ENCODE measurements at regions of chr14 and their contacts with region 1.

Region 1: DNA sequence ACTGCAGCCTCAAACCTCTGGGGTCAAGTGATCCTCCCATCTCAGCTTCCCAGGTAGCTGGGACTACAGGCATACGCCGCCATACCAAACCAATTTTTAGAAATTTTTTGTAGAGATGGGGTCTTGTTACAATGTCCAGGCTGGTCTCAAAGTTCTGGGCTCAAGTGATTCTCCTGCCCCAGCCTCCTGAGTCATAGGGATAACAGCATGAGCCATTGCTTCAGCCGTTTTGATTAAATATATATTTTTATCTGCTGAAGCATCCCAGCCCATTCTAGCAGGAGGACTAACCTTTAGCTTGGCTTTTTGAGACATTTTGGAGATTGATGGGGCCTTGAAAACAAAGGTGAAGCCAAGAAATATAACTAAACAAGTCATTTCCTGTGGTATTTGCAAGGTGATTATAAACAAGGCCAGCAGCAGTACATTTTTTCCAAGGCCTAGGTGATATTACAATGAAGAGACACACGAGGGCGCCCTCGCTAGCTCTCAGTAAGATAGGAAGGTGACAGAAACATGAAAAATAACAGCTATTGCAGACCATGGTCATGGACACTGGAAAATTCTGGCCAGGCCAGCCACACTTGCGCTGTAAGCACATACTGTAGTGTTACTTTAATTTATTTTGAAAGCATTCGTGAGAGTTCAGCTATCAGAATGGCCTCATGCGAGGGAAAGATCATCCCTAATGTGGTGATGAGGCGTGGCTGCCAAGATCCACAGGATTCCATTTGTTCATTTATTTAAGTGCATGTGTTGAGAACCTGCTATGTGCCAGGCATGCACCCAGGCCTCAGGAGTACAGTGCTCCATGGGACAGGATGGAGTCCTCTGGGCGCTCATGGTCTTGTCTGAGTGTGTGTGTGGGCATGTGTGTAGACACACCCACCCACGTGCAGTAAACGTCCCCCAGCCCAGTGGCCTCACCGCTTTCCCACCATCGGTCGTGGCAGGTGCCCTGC is 63.5 kb downstream of the DGLUCY start:
- DNase-seq: peak in 1 of 2 experiments; percentile 66
- H3K4me3 ChIP-seq: no peak overlapping the region
- H3K27ac ChIP-seq: no peak overlapping the region
- H3K4me1 ChIP-seq: no peaks in the 10 kb centered on the region; a peak in 2 of 7 replicates
- H3K27me3 ChIP-seq: no peaks in the 10 kb centered on the region
- CTCF ChIP-seq: peak in 2 of 3 experiments; percentile 63 to 72; a peak in 3 of 4 replicates
- EP300 ChIP-seq: no peak
- POLR2A ChIP-seq: no peak
- RAD21 ChIP-seq: peak; percentile 71 to 81

Region 2: GRCh38 chr14:90903101-90903500 is 274.3 kb before region 1 on chr14:
- CTCF ChIA-PET with region 1: interaction called, 118 read pairs
- POLR2A ChIA-PET with region 1: no interaction called
- DNase-seq: no peak
- H3K4me3 ChIP-seq: no peak overlapping the region
- H3K27ac ChIP-seq: no peak overlapping the region
- H3K4me1 ChIP-seq: no peaks in the 10 kb centered on the region
- H3K27me3 ChIP-seq: no peaks in the 10 kb centered on the region
- CTCF ChIP-seq: peak in 2 of 3 experiments; percentile 65 to 69; a peak in 3 of 4 replicates
- EP300 ChIP-seq: no peak
- POLR2A ChIP-seq: no peak
- RAD21 ChIP-seq: peak; percentile 85 to 89

Region 3: GRCh38 chr14:91146661-91147060 is 30.7 kb before region 1 on chr14:
- CTCF ChIA-PET with region 1: interaction called, 10 read pairs
- POLR2A ChIA-PET with region 1: no interaction called
- DNase-seq: no peak
- H3K4me3 ChIP-seq: no peak overlapping the region
- H3K27ac ChIP-seq: no peak overlapping the region
- H3K4me1 ChIP-seq: no peaks in the 10 kb centered on the region
- H3K27me3 ChIP-seq: no peaks in the 10 kb centered on the region
- CTCF ChIP-seq: no peak
- EP300 ChIP-seq: no peak
- POLR2A ChIP-seq: no peak
- RAD21 ChIP-seq: no peak

Region 4: GRCh38 chr14:91193069-91193468 is 15.7 kb after region 1 on chr14:
- CTCF ChIA-PET with region 1: interaction called, 16 read pairs
- POLR2A ChIA-PET with region 1: no interaction called
- DNase-seq: no peak
- H3K4me3 ChIP-seq: no peak overlapping the region
- H3K27ac ChIP-seq: no peak overlapping the region
- H3K4me1 ChIP-seq: no peaks in the 10 kb centered on the region; a peak in 1 of 7 replicates
- H3K27me3 ChIP-seq: no peaks in the 10 kb centered on the region
- CTCF ChIP-seq: no peak
- EP300 ChIP-seq: no peak
- POLR2A ChIP-seq: no peak
- RAD21 ChIP-seq: no peak

Region 5: DNA sequence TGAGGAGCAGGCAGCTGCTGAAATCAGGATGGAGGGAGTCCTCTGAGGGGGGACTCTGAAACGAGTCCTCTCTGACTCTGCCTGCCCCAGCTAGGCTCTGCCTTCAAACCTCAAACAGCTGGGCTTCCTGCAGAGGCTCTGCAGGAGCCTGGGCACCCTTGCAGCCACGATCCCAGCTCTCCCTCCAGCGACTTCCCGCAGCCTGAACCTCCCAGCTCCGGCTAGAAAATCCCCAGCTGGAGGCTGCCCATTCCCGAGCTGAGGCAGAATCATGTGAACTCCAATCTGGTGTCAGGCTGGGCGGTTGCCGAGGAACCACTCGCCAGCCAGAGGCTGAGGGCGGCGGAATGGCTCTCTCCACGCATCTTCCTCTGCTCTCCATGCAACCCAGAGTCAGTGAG is 67.1 kb after region 1 on chr14 and contains the start of gene GPR68:
- CTCF ChIA-PET with region 1: interaction called, 10 read pairs
- POLR2A ChIA-PET with region 1: no interaction called
- DNase-seq: peak in 1 of 2 experiments; percentile 56
- H3K4me3 ChIP-seq: no peak within 1 kb of the TSS
- H3K27ac ChIP-seq: no peak within 1 kb of the TSS
- H3K4me1 ChIP-seq: no peaks in the 10 kb centered on the region; a peak in 3 of 7 replicates
- H3K27me3 ChIP-seq: peaks cover 0 to 2% (median 0%) of the 10 kb centered on the region in 4 experiments; a peak in 1 of 7 replicates
- CTCF ChIP-seq: no peak
- EP300 ChIP-seq: no peak
- POLR2A ChIP-seq: no peak
- RAD21 ChIP-seq: no peak
- total RNA-seq, gene GPR68: 0.22 and 0.33 TPM in 2 replicates

Region 6: DNA sequence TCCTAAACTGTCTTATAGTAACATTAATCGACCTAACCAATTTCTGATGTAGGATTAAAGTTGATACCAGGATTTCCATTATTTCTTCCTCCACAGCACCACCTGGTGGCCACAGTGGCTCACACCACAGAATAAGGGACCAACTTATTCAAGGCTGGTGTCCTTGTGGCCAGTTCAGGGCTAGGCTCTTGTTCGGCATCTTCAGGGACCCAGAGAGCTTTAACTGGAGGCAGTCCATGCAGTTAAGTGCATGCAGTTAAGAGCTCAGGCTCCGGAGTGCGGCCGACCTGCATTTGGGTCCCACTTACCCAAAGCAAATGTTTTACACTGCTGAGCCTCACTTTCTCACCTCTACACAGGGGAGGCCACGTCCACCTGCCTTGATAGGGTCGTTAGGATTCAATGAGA is 109.2 kb after region 1 on chr14:
- CTCF ChIA-PET with region 1: interaction called, 84 read pairs
- POLR2A ChIA-PET with region 1: no interaction called
- DNase-seq: peak; percentile 65 to 89
- H3K4me3 ChIP-seq: no peak overlapping the region
- H3K27ac ChIP-seq: no peak overlapping the region
- H3K4me1 ChIP-seq: no peaks in the 10 kb centered on the region
- H3K27me3 ChIP-seq: no peaks in the 10 kb centered on the region
- CTCF ChIP-seq: peak; percentile 65 to 97 (median 96)
- EP300 ChIP-seq: no peak
- POLR2A ChIP-seq: no peak
- RAD21 ChIP-seq: peak; percentile 72 to 81

Region 7: GRCh38 chr14:91470216-91470615 is 292.9 kb after region 1 on chr14:
- CTCF ChIA-PET with region 1: no interaction called
- POLR2A ChIA-PET with region 1: no interaction called
- DNase-seq: no peak
- H3K4me3 ChIP-seq: no peak overlapping the region
- H3K27ac ChIP-seq: no peak overlapping the region
- H3K4me1 ChIP-seq: no peaks in the 10 kb centered on the region
- H3K27me3 ChIP-seq: no peaks in the 10 kb centered on the region
- CTCF ChIP-seq: no peak
- EP300 ChIP-seq: no peak
- POLR2A ChIP-seq: no peak
- RAD21 ChIP-seq: no peak

Measured in H1 (cell line).